ENCODE measurements at regions of chr12 and their contacts with region 1.

Region 1: DNA sequence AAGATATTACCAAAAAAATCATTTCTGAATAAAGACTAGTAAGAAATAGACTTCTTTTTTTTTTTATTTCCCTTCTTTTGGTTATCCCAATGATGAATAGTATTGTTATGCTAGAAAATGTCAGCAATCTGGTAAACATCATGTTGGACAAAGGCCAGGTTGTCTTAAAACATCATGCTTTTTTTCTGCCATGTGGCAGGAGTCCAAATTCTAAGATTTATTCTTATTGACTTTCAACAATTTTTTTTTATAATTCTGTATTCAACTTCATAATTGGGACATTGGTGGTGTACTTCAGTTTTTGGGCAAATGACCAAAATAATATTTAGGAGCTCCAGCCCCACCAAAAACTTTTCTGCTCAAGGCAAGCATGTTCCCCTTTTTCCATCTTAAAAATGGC is 10.5 kb downstream of the DCN start:
- DNase-seq: no peak
- H3K4me3 ChIP-seq: no peak overlapping the region
- H3K27ac ChIP-seq: no peak overlapping the region
- H3K4me1 ChIP-seq: no peaks in the 10 kb centered on the region
- H3K27me3 ChIP-seq: peaks cover 2% of the 10 kb centered on the region
- CTCF ChIP-seq: no peak

Region 2: DNA sequence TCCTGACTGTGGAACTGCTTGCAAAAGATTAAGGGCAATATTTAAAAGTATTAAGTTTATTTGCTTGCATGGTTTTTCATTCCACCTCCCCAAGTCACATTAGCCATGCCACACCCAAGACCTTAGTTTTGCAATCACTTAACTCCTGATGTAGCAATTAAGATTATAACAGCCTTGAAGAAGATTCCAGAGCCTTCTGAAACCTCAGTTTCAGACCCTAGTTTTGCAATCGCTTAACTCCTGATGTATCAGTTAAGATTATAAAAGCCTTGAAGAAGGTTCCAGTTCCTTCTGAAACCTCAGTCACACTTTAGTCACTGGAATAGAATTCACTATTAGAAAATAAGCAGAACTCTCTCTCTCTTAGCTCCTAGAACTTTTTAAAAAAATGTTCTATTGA is 53.2 kb after region 1 on chr12:
- CTCF ChIA-PET with region 1: no interaction called
- dilution Hi-C with region 1: loop called (anchors 5 kb)
- in situ Hi-C with region 1: no loop called
- intact Hi-C with region 1: no loop called
- DNase-seq: no peak
- H3K4me3 ChIP-seq: no peak overlapping the region
- H3K27ac ChIP-seq: no peak overlapping the region
- H3K4me1 ChIP-seq: no peaks in the 10 kb centered on the region
- H3K27me3 ChIP-seq: peaks cover 4% of the 10 kb centered on the region
- CTCF ChIP-seq: no peak

Region 3: DNA sequence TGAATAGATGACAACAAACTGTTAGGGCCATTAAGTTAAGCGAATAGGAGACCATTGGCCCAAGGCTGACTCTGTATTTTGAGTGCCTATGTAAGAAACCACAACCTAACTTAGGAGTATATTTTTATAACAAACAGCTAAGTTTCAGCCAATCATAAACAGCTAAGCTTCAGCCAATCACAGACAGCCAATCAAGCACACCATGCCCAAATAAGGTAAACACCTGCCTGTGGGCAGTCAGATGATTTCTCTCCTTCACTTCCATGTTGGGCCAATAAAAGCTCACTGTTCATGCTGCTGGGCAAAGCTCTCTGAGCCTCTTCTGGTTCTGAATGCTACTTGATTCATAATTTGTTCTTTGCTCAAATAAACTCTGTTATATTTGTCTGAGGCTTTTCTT is 629.0 kb after region 1 on chr12:
- CTCF ChIA-PET with region 1: no interaction called
- dilution Hi-C with region 1: no loop called
- in situ Hi-C with region 1: no loop called
- intact Hi-C with region 1: no loop called
- DNase-seq: no peak
- H3K4me3 ChIP-seq: no peak overlapping the region
- H3K27ac ChIP-seq: no peak overlapping the region
- H3K4me1 ChIP-seq: peaks cover 9% of the 10 kb centered on the region
- H3K27me3 ChIP-seq: no peaks in the 10 kb centered on the region
- CTCF ChIP-seq: no peak

Measured in mammary epithelial cell (primary cell).